ENCODE measurements at regions of chr1 and their contacts with region 1.

Region 1: GRCh38 chr1:109099938-109100773 is 9.6 kb downstream of the TMEM167B start:
- DNase-seq: peak; percentile 81
- ATAC-seq: peak; percentile 98
- H3K4me3 ChIP-seq: peak overlapping the region; percentile 79 to 88
- H3K27ac ChIP-seq: peak overlapping the region; percentile 90
- H3K4me1 ChIP-seq: no peaks in the 10 kb centered on the region; the same call in 1 of the 2 replicates
- H3K27me3 ChIP-seq: no peaks in the 10 kb centered on the region
- CTCF ChIP-seq: peak; percentile 90

Region 2: GRCh38 chr1:109034382-109034781 is 65.8 kb before region 1 on chr1:
- CTCF ChIA-PET with region 1: no interaction called
- POLR2A ChIA-PET with region 1: interaction called, 14 read pairs
- in situ Hi-C with region 1: no loop called
- intact Hi-C with region 1: no loop called
- DNase-seq: no peak
- ATAC-seq: no peak
- H3K4me3 ChIP-seq: no peak overlapping the region
- H3K27ac ChIP-seq: no peak overlapping the region
- H3K4me1 ChIP-seq: no peaks in the 10 kb centered on the region
- H3K27me3 ChIP-seq: no peaks in the 10 kb centered on the region
- CTCF ChIP-seq: no peak

Region 3: GRCh38 chr1:109112652-109113285 is 12.6 kb after region 1 on chr1:
- CTCF ChIA-PET with region 1: interaction called, 18 read pairs
- POLR2A ChIA-PET with region 1: interaction called, 3 read pairs
- in situ Hi-C with region 1: no loop called
- intact Hi-C with region 1: no loop called
- DNase-seq: no peak
- ATAC-seq: peak; percentile 94
- H3K4me3 ChIP-seq: peak overlapping the region; percentile 3 to 30; a peak in 3 of 4 replicates
- H3K27ac ChIP-seq: no peak overlapping the region
- H3K4me1 ChIP-seq: no peaks in the 10 kb centered on the region
- H3K27me3 ChIP-seq: no peaks in the 10 kb centered on the region
- CTCF ChIP-seq: peak; percentile 91

Measured in Panc1 (cell line).